Stomach (tissue), 19 donors: ENCODE measurements at regions of chr1 and their contacts with region 1.

Region 1: GRCh38 chr1:6794164-6794563 is 8.9 kb downstream of the CAMTA1 start:
- DNase-seq: peak in 1 of 2 donors; percentile 69
- H3K4me3 ChIP-seq: no peak overlapping the region
- H3K27ac ChIP-seq: no peak overlapping the region
- H3K4me1 ChIP-seq: peaks cover 5 to 75% (median 33%) of the 10 kb centered on the region in 4 donors
- H3K27me3 ChIP-seq: no peaks in the 10 kb centered on the region
- CTCF ChIP-seq: peak in 3 of 7 experiments; percentile 16 to 34 (median 30)
- EP300 ChIP-seq: no peak
- POLR2A ChIP-seq: no peak

Region 2: DNA sequence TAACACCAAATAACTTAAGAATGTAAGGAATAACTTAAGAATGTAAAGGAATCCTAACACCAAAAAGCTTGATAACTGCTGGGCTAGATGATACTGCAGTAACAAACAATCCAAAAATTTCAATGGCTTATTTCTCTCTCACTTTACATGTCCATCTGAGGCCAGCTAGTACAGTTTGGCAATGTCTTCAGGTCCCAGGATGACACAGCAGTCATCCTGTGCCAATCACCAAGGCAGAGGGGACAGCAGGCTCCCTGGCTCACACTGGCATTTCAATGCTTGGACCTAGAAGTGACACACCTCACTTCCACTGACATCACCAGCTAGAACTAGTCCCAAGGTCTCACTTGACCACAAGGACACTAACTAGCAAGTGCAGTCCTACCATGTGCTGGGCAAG is 107.9 kb before region 1 on chr1:
- intact Hi-C with region 1: no loop called
- DNase-seq: no peak
- H3K4me3 ChIP-seq: no peak overlapping the region
- H3K27ac ChIP-seq: no peak overlapping the region
- H3K4me1 ChIP-seq: peaks cover 0 to 4% (median under 1%) of the 10 kb centered on the region in 4 donors
- H3K27me3 ChIP-seq: no peaks in the 10 kb centered on the region
- CTCF ChIP-seq: no peak
- EP300 ChIP-seq: no peak
- POLR2A ChIP-seq: no peak

Region 3: GRCh38 chr1:6889875-6890480 is 95.8 kb after region 1 on chr1:
- intact Hi-C with region 1: loop called (anchors 10 kb)
- DNase-seq: peak; percentile 65 to 83
- H3K4me3 ChIP-seq: no peak overlapping the region
- H3K27ac ChIP-seq: no peak overlapping the region
- H3K4me1 ChIP-seq: peaks cover 0 to 14% (median 7%) of the 10 kb centered on the region in 4 donors
- H3K27me3 ChIP-seq: no peaks in the 10 kb centered on the region
- CTCF ChIP-seq: peak in 5 of 7 experiments; percentile 53 to 72 (median 69)
- EP300 ChIP-seq: no peak
- POLR2A ChIP-seq: no peak